ENCODE measurements at regions of chr15 and their contacts with region 1.

Region 1: DNA sequence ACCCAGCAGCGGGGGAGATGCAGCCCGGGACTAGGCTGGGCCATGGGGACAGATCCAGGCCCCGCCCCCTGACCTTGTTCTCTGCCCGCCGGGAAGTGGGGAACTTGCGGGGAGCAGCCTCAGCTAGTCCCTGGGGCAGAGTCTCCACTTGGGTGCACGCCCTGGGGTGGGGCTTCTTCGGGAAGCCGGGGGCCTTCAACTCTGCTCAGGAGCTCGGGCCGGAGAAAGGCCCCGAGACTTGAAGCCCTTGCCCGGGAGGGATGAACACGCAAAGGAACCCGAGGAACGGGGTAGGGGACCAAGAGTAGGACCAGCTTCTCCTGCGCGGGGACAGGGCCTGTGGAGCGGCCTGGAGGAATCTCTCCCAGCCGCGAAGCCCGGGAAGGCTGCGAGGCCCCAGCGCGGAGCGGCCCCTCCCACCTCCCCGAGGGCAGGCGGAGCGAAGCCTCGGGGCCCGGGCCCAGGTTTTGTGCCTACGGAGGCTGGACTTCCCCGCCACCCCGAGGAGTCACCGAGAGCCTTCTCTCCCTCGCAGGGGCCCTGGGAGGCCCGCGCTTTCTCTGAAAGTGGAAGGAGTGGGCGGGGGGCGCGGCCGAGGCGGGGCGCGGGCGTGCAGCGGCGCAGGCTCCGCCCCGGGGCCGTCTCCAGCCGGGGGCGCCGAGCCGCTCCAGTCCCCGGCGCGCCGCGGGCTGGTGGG is at the start of gene ITPKA:
- DNase-seq: peak; percentile 78
- H3K4me3 Mint-ChIP-seq: peak within 1 kb of the TSS; percentile 76
- H3K27ac Mint-ChIP-seq: peak within 1 kb of the TSS; percentile 79
- H3K4me1 Mint-ChIP-seq: peaks cover 38% of the 10 kb centered on the region
- H3K27me3 Mint-ChIP-seq: peaks cover 16% of the 10 kb centered on the region
- total RNA-seq, gene ITPKA: 2.8 and 3.1 TPM in 2 replicates

Region 2: GRCh38 chr15:40928821-40929659 is 564.3 kb before region 1 on chr15 and contains the start of gene DLL4:
- intact Hi-C with region 1: loop called (anchors 10 kb)
- DNase-seq: no peak
- H3K4me3 Mint-ChIP-seq: peak within 1 kb of the TSS; percentile 74
- H3K27ac Mint-ChIP-seq: peak within 1 kb of the TSS; percentile 65
- H3K4me1 Mint-ChIP-seq: peaks cover 45% of the 10 kb centered on the region
- H3K27me3 Mint-ChIP-seq: peaks cover 66% of the 10 kb centered on the region
- total RNA-seq, gene DLL4: 0.29 and 0.36 TPM in 2 replicates

Region 3: DNA sequence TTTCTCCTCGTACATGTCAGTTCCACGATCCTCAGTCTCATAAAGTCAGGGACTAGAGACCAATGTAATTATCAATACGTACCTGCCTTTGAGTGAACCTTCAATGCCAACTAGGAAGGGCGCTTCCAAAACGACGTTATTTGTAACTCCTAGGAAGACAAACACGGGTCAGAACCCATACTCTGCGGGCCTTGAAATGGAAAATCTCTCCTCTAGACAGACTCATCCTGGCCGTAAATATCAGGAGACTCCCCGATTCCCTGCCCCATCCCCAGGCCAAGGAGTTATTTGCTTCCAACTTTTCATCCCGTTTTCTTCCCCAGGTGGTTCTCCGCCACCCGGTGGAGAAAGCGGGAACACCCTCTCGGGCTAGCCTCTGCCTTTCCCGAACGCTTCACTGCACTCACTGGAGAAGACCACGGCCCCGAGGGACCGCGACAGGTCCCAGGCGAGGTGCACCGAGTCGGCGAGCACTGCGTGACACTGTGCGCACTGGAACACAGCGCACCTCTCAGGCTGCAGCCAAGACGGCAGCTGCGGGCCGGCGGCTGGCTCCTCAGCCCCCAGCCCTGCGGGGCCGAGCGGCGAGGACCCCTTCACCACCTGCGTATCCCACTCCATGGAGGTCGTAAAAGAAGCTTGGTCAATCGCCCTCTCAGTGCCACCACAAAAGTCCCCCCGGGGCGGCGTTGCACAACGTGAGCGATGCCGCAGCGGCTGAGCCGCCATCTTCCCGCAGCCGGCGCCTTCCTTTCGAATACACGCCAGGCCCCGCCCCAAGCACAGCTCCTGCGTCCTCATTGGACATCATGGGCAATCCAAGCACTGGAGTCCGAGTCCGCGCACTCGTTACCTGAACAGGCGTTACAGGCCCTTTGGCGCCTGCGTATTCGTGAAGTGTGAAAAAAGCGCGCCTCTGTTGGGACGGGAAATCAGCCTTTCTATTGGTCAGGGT is 161.2 kb before region 1 on chr15 and contains the start of gene OIP5:
- intact Hi-C with region 1: loop called (anchors 5 kb)
- DNase-seq: peak; percentile 98
- H3K4me3 Mint-ChIP-seq: peak within 1 kb of the TSS; percentile 94
- H3K27ac Mint-ChIP-seq: peak within 1 kb of the TSS; percentile 95
- H3K4me1 Mint-ChIP-seq: peaks cover 33% of the 10 kb centered on the region
- H3K27me3 Mint-ChIP-seq: no peaks in the 10 kb centered on the region
- total RNA-seq, gene OIP5: 15.6 and 17.6 TPM in 2 replicates

Region 4: GRCh38 chr15:41377978-41378377 is 115.4 kb before region 1 on chr15:
- intact Hi-C with region 1: no loop called
- DNase-seq: no peak
- H3K4me3 Mint-ChIP-seq: no peak overlapping the region
- H3K27ac Mint-ChIP-seq: no peak overlapping the region
- H3K4me1 Mint-ChIP-seq: no peaks in the 10 kb centered on the region
- H3K27me3 Mint-ChIP-seq: no peaks in the 10 kb centered on the region

Region 5: DNA sequence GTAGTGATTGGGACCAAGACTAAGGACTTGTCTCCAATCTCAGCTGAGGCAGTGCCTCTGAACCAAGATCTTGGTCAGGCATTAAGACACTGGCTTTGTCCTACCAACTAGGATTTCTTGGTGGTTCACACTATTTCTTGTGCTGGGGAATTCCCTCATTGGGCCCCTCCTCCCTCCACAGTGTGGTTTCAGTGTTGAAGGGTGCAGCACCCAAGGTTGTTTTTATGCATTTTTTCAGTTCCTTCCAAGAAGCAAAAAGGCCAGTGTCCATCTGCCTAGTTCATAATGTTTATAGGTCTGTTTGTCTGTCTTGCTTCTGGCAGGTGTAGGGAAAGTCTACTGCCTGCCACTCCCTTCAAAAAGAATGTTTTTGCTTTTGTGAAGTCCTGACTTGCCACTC is 10.2 kb before region 1 on chr15:
- intact Hi-C with region 1: loop called (anchors 1 kb)
- DNase-seq: peak; percentile 54
- H3K4me3 Mint-ChIP-seq: peak overlapping the region; percentile 30
- H3K27ac Mint-ChIP-seq: peak overlapping the region; percentile 48
- H3K4me1 Mint-ChIP-seq: peaks cover 58% of the 10 kb centered on the region
- H3K27me3 Mint-ChIP-seq: peaks cover 2% of the 10 kb centered on the region

Region 6: DNA sequence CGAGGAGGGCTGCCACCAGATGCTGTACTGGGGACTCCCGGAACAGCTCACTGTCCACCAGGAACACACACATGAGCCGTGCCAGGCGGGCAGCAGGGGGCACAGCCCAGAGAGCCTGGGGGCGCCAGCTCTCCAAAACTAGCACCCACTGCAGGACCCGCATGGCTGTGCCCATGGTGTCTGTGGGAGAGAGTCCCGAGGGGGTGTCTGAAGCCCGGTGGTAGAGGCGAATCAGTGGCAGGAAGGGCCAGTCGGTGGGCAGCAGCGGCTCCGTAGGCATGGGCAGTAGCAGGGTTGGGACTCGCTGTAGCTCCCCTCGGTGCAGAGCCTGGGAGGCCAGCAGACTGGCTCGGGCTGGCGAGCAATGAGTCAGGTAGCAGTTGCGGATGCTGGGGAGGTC is 27.3 kb after region 1 on chr15:
- intact Hi-C with region 1: no loop called
- DNase-seq: no peak
- H3K4me3 Mint-ChIP-seq: no peak overlapping the region
- H3K27ac Mint-ChIP-seq: no peak overlapping the region
- H3K4me1 Mint-ChIP-seq: no peaks in the 10 kb centered on the region
- H3K27me3 Mint-ChIP-seq: no peaks in the 10 kb centered on the region

Region 7: GRCh38 chr15:41557673-41558399 is 64.5 kb after region 1 on chr15:
- intact Hi-C with region 1: loop called (anchors 5 kb)
- DNase-seq: peak; percentile 43
- H3K4me3 Mint-ChIP-seq: peak overlapping the region; percentile 92
- H3K27ac Mint-ChIP-seq: peak overlapping the region; percentile 89
- H3K4me1 Mint-ChIP-seq: peaks cover 19% of the 10 kb centered on the region
- H3K27me3 Mint-ChIP-seq: peaks cover 46% of the 10 kb centered on the region

Region 8: DNA sequence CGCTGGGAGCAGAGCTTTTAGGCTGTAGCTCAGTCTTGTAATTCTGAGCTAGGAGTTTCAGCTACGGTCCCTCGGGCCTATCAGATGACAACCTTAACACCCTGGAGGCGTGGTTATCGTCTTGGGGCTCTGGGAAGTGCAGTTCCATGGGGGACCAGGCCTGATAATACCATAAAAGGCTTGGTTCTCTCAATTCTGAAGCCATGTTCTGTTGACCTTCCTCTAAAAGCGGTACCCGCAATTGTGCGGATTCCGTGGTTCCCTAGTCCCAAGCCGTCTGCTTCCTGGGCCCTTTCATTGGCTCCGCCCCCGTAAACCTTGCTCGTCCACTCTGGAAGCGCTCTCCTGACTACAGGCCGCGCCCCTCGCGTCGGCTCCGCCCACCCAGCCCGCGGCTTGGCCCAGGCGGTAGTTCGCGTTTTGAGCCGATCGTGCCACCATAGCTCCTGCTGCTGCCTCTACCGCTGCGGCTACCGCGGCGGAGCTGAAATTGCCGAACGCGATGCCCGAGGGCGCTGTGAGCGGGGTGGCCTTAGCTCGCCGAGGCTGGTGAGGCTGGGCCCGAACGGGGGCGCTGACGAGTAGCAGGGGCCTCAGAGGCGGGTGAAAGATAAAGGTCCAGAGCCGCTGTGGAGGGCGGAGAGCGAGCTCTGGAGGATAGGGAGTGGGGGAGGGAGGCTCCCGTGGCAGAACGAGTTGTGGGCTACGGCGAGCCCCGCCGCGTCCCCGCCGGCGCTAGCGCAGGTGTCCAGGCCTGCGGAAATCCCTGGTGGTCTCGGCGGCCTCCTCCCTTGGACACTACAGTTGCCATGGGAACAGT is 280.9 kb after region 1 on chr15 and contains the start of gene MAPKBP1:
- intact Hi-C with region 1: loop called (anchors 5 kb)
- DNase-seq: peak; percentile 98
- H3K4me3 Mint-ChIP-seq: peak within 1 kb of the TSS; percentile 93
- H3K27ac Mint-ChIP-seq: peak within 1 kb of the TSS; percentile 92
- H3K4me1 Mint-ChIP-seq: peaks cover 59% of the 10 kb centered on the region
- H3K27me3 Mint-ChIP-seq: no peaks in the 10 kb centered on the region
- total RNA-seq, gene MAPKBP1: 26.3 and 28.2 TPM in 2 replicates

Region 9: DNA sequence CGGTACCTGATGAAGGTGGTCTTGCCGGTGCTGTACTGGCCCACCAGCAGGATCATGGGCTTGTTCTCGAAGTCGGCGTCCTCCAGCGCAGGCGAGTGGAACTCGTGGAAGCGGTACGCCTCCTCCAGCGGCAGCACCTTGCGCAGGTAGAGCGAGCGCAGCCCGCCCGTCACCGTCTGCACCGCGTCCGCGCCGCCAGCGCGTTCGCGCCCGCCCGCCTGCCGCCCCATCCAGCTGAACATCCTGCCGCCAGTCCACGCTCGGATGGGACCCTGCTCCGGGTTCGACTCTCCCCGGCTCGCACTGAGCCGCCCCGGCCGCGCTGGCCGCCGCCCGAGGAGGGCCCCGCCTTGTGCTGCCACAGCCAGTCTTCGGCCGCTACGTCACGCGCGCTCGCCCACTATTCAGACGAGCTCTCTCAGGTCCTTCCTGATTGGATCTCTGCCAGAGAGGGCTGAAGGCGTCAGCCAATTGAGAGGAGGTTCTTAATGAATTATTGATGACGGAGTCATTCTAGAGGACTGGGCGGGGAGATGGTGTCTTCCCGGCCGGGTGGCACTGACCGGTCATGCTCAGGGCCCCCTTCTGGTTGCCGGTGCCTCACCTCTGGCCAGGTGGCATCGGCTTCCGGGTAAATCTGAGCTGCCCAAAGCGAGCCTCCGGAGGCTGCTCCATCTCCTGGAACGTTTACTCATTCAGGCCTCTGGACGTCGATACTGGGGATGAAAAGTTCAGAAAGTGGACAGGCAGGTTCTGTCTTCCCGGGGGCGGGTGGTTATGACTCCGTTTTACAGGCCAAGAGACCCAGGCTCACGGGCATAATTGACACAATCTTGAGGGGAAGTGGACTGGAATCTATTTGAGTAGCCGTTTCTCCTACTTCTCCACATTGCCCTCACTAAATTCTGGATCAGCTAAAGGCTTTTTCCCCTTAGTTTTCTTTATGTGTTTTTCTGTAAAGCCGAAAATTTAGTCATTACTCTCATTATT is 479.2 kb after region 1 on chr15 and contains the start of gene EHD4:
- intact Hi-C with region 1: loop called (anchors 10 kb)
- DNase-seq: peak; percentile 95
- H3K4me3 Mint-ChIP-seq: peak within 1 kb of the TSS; percentile 91
- H3K27ac Mint-ChIP-seq: peak within 1 kb of the TSS; percentile 91
- H3K4me1 Mint-ChIP-seq: peaks cover 60% of the 10 kb centered on the region
- H3K27me3 Mint-ChIP-seq: peaks cover 7% of the 10 kb centered on the region
- total RNA-seq, gene EHD4: 29.5 and 30.1 TPM in 2 replicates

Region 10: DNA sequence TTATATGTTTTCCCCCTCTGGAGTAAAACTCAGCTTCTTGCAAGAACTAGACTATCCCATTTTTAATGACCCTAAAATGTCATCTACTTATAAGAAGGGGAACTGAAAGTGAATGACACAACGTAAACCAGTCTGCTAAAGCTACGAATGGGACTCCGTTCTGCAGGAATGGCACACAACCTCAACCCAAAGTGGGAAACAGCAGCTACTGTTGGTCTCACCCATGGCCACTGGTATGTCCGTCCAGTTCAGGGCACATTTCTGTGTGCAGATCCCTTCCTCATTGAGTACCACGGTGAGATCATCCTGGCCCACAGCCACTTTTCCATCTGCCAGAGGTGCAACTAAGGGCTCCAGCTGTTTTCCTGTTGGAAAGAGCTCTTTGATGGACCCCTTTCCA is 690.9 kb after region 1 on chr15:
- intact Hi-C with region 1: no loop called
- DNase-seq: no peak
- H3K4me3 Mint-ChIP-seq: no peak overlapping the region
- H3K27ac Mint-ChIP-seq: no peak overlapping the region
- H3K4me1 Mint-ChIP-seq: no peaks in the 10 kb centered on the region
- H3K27me3 Mint-ChIP-seq: no peaks in the 10 kb centered on the region